ENCODE measurements at regions of chr22 and their contacts with region 1.

Region 1: GRCh38 chr22:22666307-22667091 is 22.1 kb downstream of the GGTLC2 start:
- DNase-seq: peak; percentile 45
- ATAC-seq: peak; percentile 63
- H3K4me3 Mint-ChIP-seq: no peak overlapping the region
- H3K27ac Mint-ChIP-seq: no peak overlapping the region
- H3K4me1 Mint-ChIP-seq: peaks cover 4% of the 10 kb centered on the region
- H3K27me3 Mint-ChIP-seq: peaks cover 13% of the 10 kb centered on the region

Region 2: GRCh38 chr22:22598144-22598543 is 68.4 kb before region 1 on chr22:
- CTCF ChIA-PET with region 1: no interaction called
- POLR2A ChIA-PET with region 1: no interaction called
- DNase-seq: no peak
- ATAC-seq: no peak
- H3K4me3 Mint-ChIP-seq: no peak overlapping the region
- H3K27ac Mint-ChIP-seq: no peak overlapping the region
- H3K4me1 Mint-ChIP-seq: no peaks in the 10 kb centered on the region
- H3K27me3 Mint-ChIP-seq: peaks cover 2% of the 10 kb centered on the region

Region 3: DNA sequence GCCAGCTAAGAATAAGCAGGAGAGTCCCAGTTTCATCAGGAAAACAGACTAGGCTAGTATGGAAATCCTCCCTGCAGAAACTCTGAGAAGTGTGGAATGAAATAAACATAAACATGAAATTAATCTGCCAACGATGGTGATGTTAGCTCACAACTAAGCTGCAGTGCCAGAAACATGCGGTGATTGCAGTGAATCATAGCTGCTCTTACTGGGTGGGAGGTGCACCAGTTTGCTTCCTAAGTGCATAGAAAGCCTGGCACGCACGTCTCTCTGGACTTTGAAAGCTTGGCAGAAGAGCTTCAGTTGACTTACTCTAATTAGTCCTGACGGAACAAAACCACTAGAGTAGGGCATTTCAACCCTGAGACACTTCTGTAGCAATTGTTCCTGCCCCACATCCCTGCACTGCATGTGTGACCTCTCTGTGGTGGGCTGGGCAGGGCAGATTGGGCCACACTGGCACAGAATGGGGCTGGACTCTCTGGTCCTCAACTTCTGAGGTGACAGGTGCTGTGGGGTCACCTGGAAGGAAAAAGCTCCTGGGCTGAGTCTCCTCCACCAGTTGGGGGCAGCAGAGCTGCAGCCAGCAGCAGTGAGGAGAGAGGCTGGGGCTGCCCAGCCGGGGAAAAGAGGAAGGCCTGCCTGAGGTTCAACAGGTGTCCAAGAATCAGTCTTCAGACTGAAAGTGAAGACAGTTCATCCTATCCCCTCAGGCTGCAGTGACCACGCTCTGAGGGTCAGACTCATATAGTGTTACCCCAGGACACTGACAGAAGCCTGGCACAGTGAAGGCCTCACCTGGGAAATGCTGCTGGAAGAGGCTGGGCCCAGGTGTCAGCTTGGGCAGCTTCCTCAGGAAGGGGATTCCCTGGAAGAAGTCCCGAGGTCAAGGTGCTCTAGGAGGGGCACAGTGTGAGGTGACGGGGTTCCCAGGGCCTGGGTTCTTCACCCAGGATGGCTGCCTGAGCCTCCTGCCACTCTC is 18.4 kb after region 1 on chr22:
- CTCF ChIA-PET with region 1: interaction called, 15 read pairs
- POLR2A ChIA-PET with region 1: no interaction called
- DNase-seq: peak; percentile 30
- ATAC-seq: peak; percentile 55
- H3K4me3 Mint-ChIP-seq: no peak overlapping the region
- H3K27ac Mint-ChIP-seq: no peak overlapping the region
- H3K4me1 Mint-ChIP-seq: no peaks in the 10 kb centered on the region
- H3K27me3 Mint-ChIP-seq: peaks cover 3% of the 10 kb centered on the region

Region 4: DNA sequence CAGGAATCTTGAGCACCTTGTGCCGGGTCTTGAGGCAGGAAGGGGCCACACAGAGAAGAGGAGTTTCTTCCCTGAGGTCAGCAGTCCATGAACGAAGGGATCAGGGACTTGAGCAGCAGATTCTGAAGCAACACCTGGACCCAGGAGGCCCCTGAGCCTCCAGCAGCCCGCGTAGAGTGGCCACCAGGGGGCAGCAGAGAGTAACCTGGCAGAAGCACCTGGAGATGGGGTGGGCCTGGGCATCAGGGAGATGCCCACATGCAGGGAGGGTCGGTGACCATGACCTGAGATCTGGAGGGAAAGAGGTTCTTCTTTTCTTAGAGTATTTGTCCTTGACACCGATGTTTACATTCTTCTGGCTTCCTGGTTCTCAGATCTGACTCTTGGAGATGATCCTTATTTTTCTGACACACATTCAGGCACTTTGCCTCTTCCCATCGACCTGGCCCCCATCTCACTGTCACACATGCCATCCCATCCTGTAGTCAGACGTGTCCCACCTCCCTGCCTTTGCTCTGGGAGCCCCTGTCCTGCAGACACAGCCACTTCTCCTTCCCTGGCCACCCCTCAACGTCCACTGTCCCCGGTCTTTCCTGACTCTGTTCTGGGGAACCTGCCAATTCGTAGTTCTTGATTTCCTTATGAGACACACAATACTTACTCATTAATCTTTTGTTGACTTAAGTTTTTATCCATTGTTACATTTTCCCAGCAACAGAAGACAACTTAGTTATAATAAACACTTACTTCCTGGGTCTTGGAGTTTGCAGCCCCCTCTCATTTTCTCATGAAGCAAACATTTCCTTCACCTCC is 44.4 kb after region 1 on chr22:
- CTCF ChIA-PET with region 1: interaction called, 12 read pairs
- POLR2A ChIA-PET with region 1: no interaction called
- DNase-seq: peak; percentile 81
- ATAC-seq: peak; percentile 86
- H3K4me3 Mint-ChIP-seq: no peak overlapping the region
- H3K27ac Mint-ChIP-seq: no peak overlapping the region
- H3K4me1 Mint-ChIP-seq: peaks cover 4% of the 10 kb centered on the region
- H3K27me3 Mint-ChIP-seq: no peaks in the 10 kb centered on the region

Region 5: GRCh38 chr22:22798232-22798616 is 131.7 kb after region 1 on chr22:
- CTCF ChIA-PET with region 1: no interaction called
- POLR2A ChIA-PET with region 1: no interaction called
- DNase-seq: no peak
- ATAC-seq: no peak
- H3K4me3 Mint-ChIP-seq: no peak overlapping the region
- H3K27ac Mint-ChIP-seq: no peak overlapping the region
- H3K4me1 Mint-ChIP-seq: peaks cover 2% of the 10 kb centered on the region
- H3K27me3 Mint-ChIP-seq: peaks cover 15% of the 10 kb centered on the region

Region 6: GRCh38 chr22:22942511-22943329 is 276.2 kb after region 1 on chr22:
- CTCF ChIA-PET with region 1: no interaction called
- POLR2A ChIA-PET with region 1: no interaction called
- DNase-seq: peak; percentile 85
- ATAC-seq: peak; percentile 89
- H3K4me3 Mint-ChIP-seq: no peak overlapping the region
- H3K27ac Mint-ChIP-seq: no peak overlapping the region
- H3K4me1 Mint-ChIP-seq: no peaks in the 10 kb centered on the region
- H3K27me3 Mint-ChIP-seq: peaks cover 21% of the 10 kb centered on the region

Measured in activated CD8-positive, alpha-beta T cell treated with anti-CD3 and anti-CD28 coated beads, Interleukin-2, amount 10 ng/mL, durations not matched to agents 7 days and 5 days (primary cell).